Ovary (tissue), 10 donors: ENCODE measurements at regions of chr12 and their contacts with region 1.

Region 1: GRCh38 chr12:57782608-57783465 is at the start of gene TSFM:
- DNase-seq: peak; percentile 96 to 99 (median 97)
- H3K4me3 ChIP-seq: peak within 1 kb of the TSS; percentile 93
- H3K27ac ChIP-seq: peak within 1 kb of the TSS in 1 of 2 donors; percentile 9
- H3K4me1 ChIP-seq: peaks cover 3% of the 10 kb centered on the region
- H3K27me3 ChIP-seq: no peaks in the 10 kb centered on the region
- CTCF ChIP-seq: peak; percentile 94 to 97 (median 95)
- EP300 ChIP-seq: no peak
- POLR2A ChIP-seq: peak; percentile 60
- total RNA-seq, gene TSFM: 13.2 to 23.0 (median 20.1) TPM

Region 2: GRCh38 chr12:57549909-57550640 is 232.8 kb before region 1 on chr12 and contains the start of gene KIF5A:
- intact Hi-C with region 1: no loop called
- DNase-seq: peak in 1 of 5 donors; percentile 32
- H3K4me3 ChIP-seq: peak within 1 kb of the TSS; percentile 45
- H3K27ac ChIP-seq: no peak within 1 kb of the TSS
- H3K4me1 ChIP-seq: peaks cover 6% of the 10 kb centered on the region
- H3K27me3 ChIP-seq: no peaks in the 10 kb centered on the region
- CTCF ChIP-seq: no peak
- EP300 ChIP-seq: no peak
- POLR2A ChIP-seq: no peak
- total RNA-seq, gene KIF5A: 0.08 to 0.48 (median 0.30) TPM in 6 of 7 donors, not detected in the other

Region 3: DNA sequence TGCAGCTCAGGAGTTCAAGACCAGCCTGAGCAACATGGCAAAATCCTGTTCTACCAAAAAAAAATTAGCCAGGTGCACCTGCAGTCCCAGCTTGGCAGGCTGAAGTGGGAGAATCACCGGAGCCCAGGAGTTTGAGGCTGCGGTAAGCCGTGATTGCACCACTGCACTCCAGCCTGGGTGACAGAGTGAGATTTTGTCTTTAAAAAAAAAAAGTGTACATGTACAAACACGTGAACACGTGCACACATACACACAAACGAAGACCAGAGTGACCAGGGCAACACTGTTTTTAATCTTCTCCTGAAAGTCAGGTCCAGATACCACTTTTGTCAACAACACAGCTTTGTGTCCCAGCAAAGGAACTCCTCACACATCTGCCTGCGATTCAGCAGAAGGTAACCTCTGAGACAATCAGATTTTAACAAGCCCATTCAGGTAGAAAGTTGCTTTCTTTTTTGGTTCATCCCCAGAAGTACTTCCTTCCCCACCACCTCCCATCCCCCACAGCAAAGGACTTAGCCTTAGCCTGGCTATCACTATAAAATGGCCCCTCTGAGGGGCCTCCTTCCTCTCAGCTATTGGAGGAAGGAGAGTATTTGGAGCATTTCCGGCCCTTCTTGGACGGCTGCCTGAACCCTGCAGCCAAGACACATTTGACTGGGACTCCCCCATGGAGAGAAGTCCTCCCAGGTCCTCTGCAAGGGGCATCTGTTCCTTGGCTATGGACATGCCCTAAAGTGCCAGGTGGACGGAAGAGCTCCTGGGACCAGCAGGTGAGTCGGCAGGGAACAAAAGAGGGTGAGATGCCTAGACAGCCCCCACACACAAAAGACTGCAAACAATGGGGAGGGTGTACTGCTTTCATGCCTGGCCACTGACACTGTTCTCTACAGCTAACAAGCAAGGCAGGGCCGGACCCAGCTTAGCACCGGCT is 53.9 kb after region 1 on chr12:
- intact Hi-C with region 1: loop called in 1 of 4 experiments (anchors 10 kb)
- DNase-seq: peak; percentile 88 to 93 (median 92)
- H3K4me3 ChIP-seq: peak overlapping the region; percentile 25
- H3K27ac ChIP-seq: peak overlapping the region in 1 of 2 donors; percentile 58
- H3K4me1 ChIP-seq: peaks cover 67% of the 10 kb centered on the region
- H3K27me3 ChIP-seq: no peaks in the 10 kb centered on the region
- CTCF ChIP-seq: no peak
- EP300 ChIP-seq: no peak
- POLR2A ChIP-seq: no peak

Region 4: GRCh38 chr12:57904848-57905811 is 122.3 kb after region 1 on chr12:
- intact Hi-C with region 1: loop called in 2 of 4 experiments (anchors 2 kb)
- DNase-seq: peak; percentile 77 to 89 (median 87)
- H3K4me3 ChIP-seq: no peak overlapping the region
- H3K27ac ChIP-seq: no peak overlapping the region
- H3K4me1 ChIP-seq: no peaks in the 10 kb centered on the region
- H3K27me3 ChIP-seq: no peaks in the 10 kb centered on the region
- CTCF ChIP-seq: peak; percentile 99 to 100 (median 100)
- EP300 ChIP-seq: no peak
- POLR2A ChIP-seq: peak; percentile 24

Region 5: DNA sequence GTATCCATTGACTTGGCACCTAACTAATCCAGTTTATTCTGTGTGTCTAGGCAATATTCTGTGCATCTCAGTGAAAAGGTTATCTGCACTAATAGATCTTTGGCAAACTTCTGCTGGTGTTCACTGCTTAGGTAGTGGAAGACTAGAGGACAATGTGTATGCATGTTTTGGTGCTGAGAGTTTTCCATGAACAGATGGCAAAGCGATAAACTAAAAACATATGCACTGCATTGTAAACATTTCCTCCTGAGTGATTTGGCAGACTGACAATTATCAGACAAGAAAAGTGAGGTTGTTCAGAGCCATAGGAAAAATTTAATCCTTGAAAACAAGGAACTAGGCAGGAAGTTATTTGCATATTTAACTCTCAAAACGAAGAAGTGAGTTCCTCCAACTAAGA is 558.9 kb after region 1 on chr12:
- intact Hi-C with region 1: no loop called
- DNase-seq: no peak
- H3K4me3 ChIP-seq: no peak overlapping the region
- H3K27ac ChIP-seq: no peak overlapping the region
- H3K4me1 ChIP-seq: no peaks in the 10 kb centered on the region
- H3K27me3 ChIP-seq: no peaks in the 10 kb centered on the region
- CTCF ChIP-seq: no peak
- EP300 ChIP-seq: no peak
- POLR2A ChIP-seq: no peak